ENCODE measurements at regions of chr12 and their contacts with region 1.

Region 1: GRCh38 chr12:75939016-75939642 is 92.4 kb downstream of the PHLDA1 start:
- DNase-seq: peak; percentile 70
- H3K4me3 Mint-ChIP-seq: no peak overlapping the region
- H3K27ac Mint-ChIP-seq: no peak overlapping the region
- H3K4me1 Mint-ChIP-seq: peaks cover 21% of the 10 kb centered on the region
- H3K27me3 Mint-ChIP-seq: no peaks in the 10 kb centered on the region

Region 2: DNA sequence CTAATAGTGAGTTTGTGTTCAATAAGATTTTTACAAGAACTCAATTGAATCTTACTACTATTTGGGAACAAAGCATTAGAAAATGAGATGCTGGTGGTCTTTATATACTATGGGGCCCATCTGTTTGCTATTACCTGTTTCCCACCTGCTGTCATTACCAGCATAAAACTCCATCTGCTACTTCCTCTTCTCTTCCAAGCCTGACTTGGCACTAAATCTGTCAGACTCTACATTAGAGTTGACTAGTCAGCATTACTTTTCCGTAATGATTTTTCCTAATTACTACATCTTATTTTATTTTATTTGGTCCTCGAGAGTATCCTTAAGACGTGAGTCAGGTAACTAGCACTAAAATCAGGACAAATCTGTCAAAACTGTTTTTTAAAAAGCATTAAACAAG is 359.6 kb before region 1 on chr12:
- intact Hi-C with region 1: no loop called
- DNase-seq: no peak
- H3K4me3 Mint-ChIP-seq: no peak overlapping the region
- H3K27ac Mint-ChIP-seq: no peak overlapping the region
- H3K4me1 Mint-ChIP-seq: no peaks in the 10 kb centered on the region
- H3K27me3 Mint-ChIP-seq: peaks cover 10% of the 10 kb centered on the region

Region 3: DNA sequence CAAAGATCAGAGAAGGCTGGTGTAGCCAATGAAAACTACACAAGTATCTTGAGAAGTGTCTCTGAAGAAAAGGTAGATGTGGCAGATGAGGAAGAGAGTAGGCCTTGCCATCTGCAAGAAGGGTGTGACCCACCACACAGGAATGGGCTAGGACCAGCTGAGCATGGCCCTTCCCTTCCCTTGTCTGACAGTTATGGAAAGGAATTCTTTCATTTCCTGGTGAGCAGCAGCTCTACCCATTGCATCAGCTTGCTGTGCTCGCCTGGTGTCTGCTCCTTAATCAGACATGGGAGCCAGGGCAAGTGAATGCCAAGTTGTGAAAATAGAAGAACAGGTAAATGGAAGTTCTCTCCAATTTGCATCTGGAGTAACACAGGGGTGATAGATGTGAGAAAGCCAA is 282.5 kb before region 1 on chr12:
- intact Hi-C with region 1: no loop called
- DNase-seq: no peak
- H3K4me3 Mint-ChIP-seq: no peak overlapping the region
- H3K27ac Mint-ChIP-seq: no peak overlapping the region
- H3K4me1 Mint-ChIP-seq: peaks cover 21% of the 10 kb centered on the region
- H3K27me3 Mint-ChIP-seq: peaks cover 7% of the 10 kb centered on the region

Region 4: GRCh38 chr12:75738486-75738885 is 200.6 kb before region 1 on chr12:
- intact Hi-C with region 1: loop called (anchors 5 kb)
- DNase-seq: peak; percentile 64
- H3K4me3 Mint-ChIP-seq: no peak overlapping the region
- H3K27ac Mint-ChIP-seq: peak overlapping the region; percentile 59
- H3K4me1 Mint-ChIP-seq: peaks cover 17% of the 10 kb centered on the region
- H3K27me3 Mint-ChIP-seq: peaks cover 5% of the 10 kb centered on the region

Region 5: GRCh38 chr12:75814851-75815754 is 124.0 kb before region 1 on chr12:
- intact Hi-C with region 1: loop called (anchors 5 kb)
- DNase-seq: no peak
- H3K4me3 Mint-ChIP-seq: no peak overlapping the region
- H3K27ac Mint-ChIP-seq: no peak overlapping the region
- H3K4me1 Mint-ChIP-seq: peaks cover 13% of the 10 kb centered on the region
- H3K27me3 Mint-ChIP-seq: peaks cover 3% of the 10 kb centered on the region

Region 6: DNA sequence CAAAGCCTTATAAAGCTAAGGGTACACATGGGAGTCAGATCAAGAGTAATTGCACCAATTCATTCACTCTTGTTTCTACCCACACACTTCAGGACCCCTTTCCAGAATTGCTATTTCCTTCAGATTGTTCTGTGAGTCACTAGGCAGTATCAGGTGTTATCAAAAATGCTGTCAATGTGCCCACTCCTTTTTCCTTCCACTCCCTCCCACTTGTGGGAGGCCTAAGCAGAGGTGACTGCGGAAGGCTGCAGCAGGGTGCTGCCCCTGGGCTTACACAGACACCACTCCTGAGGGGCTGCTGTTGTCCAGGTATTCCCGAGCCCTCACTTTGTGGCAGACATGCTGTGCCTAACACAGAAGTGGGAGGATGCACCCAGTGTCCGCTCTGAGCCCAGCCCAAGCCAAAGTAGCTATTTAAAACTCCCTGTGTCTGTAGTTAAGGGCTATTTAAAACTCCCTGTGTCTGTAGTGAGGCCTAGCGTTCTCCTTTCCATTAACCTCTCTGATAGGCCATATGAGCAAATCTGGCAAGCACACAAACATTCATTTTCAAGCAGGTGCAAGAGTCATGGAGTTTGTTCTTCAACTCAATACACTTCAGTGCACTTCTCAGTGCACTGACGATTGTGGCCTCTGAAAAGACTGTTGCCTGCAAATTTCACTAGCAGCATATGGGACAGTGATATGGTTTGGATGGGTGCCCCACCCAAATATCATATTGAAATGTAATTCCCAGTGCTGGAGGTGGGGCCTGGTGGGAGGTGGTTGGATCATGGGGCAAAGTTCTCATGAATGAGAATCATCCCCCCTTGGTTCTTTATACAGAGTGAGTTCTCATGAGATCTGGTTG is 25.4 kb before region 1 on chr12:
- intact Hi-C with region 1: loop called (anchors 1 kb)
- DNase-seq: peak; percentile 63
- H3K4me3 Mint-ChIP-seq: no peak overlapping the region
- H3K27ac Mint-ChIP-seq: peak overlapping the region; percentile 65
- H3K4me1 Mint-ChIP-seq: peaks cover 25% of the 10 kb centered on the region
- H3K27me3 Mint-ChIP-seq: peaks cover 3% of the 10 kb centered on the region